ENCODE measurements at regions of chr16 and their contacts with region 1.

Region 1: GRCh38 chr16:3264137-3265036 is 8.0 kb upstream of the MEFV start:
- DNase-seq: peak; percentile 96 to 98
- ATAC-seq: peak; percentile 92 to 97 (median 96)
- H3K4me3 ChIP-seq: peak overlapping the region; percentile 39 to 85 (median 77)
- H3K27ac ChIP-seq: peak overlapping the region; percentile 90 to 100 (median 99)
- H3K4me1 ChIP-seq: peaks cover 0 to 39% (median 14%) of the 10 kb centered on the region in 9 donors
- H3K27me3 ChIP-seq: no peaks in the 10 kb centered on the region
- CTCF ChIP-seq: peak in 6 of 9 donors; percentile 12 to 59 (median 42)

Region 2: GRCh38 chr16:3150346-3151218 is 113.8 kb before region 1 on chr16:
- intact Hi-C with region 1: loop called in 1 of 10 experiments (anchors 10 kb)
- DNase-seq: peak; percentile 93 to 94
- ATAC-seq: peak; percentile 91 to 95 (median 94)
- H3K4me3 ChIP-seq: peak overlapping the region; percentile 53 to 78 (median 70)
- H3K27ac ChIP-seq: peak overlapping the region; percentile 59 to 93 (median 87)
- H3K4me1 ChIP-seq: peaks cover 2 to 38% (median 21%) of the 10 kb centered on the region in 9 donors
- H3K27me3 ChIP-seq: peaks cover 0 to 14% (median 0%) of the 10 kb centered on the region in 7 donors
- CTCF ChIP-seq: no peak

Region 3: GRCh38 chr16:3214904-3215600 is 49.3 kb before region 1 on chr16:
- intact Hi-C with region 1: no loop called
- DNase-seq: no peak
- ATAC-seq: no peak
- H3K4me3 ChIP-seq: no peak overlapping the region
- H3K27ac ChIP-seq: peak overlapping the region in 1 of 10 donors; percentile 69
- H3K4me1 ChIP-seq: peaks cover 0 to 6% (median 0%) of the 10 kb centered on the region in 9 donors
- H3K27me3 ChIP-seq: peaks cover 0 to 7% (median 0%) of the 10 kb centered on the region in 7 donors
- CTCF ChIP-seq: no peak

Region 4: DNA sequence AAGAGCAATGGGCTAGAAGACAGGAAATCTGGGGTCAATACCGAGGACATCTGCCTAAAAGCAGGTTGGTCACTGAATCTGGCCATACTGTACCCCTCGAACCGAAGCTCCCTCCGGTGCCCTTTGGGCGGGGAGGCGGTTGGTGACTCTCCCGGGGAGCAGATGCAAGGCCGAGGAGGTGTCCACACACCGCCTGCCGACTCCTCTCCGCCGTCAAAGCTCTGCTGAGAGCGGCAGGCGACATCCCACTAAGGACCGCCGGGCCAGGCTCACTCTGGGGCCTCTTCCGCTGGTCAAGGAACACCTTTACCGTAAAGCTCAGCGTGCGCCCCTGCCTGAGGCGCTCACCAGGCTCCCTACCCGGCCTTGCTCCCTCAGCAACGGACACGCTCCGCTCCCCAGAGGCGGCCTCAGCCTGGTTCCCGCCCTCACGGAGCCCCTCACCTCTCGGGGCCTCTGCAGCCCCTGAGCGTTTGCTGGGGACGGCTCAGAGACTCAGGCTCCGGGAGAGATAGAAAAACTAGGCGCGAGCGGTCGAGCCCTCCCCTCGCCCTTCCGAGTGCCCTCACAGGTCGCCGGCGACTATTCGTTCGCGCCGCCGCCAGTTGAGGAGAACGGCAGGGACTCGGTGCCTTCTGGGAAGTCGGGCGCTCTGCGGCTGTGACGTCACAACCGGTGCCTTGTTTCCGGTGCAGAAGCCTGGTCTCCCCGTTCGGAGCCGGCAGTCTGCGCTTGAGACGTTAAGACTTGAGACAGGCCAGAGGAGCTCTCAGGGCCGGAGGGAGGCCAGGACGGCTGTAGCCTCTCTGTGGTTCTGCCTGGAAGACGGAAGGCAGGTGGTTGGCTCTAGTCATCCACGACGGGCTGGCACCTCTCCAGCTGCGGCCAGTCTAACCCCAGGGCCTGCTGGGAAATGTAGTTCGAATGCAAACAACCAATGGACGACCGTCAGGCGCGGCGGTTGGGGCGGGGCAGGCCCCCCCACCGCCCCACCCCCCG is 29.5 kb before region 1 on chr16 and contains the start of gene ZNF200:
- intact Hi-C with region 1: loop called in 2 of 10 experiments (anchors 1 to 2 kb)
- DNase-seq: peak; percentile 96 to 97
- ATAC-seq: peak; percentile 99 to 100 (median 99)
- H3K4me3 ChIP-seq: peak within 1 kb of the TSS; percentile 68 to 95 (median 84)
- H3K27ac ChIP-seq: peak within 1 kb of the TSS; percentile 85 to 99 (median 96)
- H3K4me1 ChIP-seq: peaks cover 4 to 19% (median 14%) of the 10 kb centered on the region in 9 donors
- H3K27me3 ChIP-seq: no peaks in the 10 kb centered on the region
- CTCF ChIP-seq: no peak
- total RNA-seq, gene ZNF200: 4.6 to 8.9 (median 6.1) TPM

Region 5: DNA sequence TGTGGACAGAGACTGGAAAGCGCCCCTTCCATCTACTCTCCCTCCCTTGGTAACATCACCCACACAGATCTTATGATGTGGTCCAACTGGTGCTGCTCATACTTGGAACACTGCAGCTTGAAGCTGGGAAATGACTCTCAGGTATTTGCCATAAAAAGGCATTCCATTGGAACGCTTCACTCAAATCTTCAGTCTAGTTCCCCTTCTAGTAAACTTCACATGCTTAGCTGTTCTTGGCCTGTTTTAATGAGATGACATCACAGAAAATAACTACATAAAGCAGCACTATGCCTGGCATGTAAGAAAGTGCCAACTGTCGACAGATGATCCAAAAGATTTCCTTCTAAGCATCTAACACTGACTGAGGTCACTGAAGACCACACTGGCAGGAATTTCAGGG is 28.2 kb after region 1 on chr16:
- intact Hi-C with region 1: no loop called
- DNase-seq: no peak
- ATAC-seq: no peak
- H3K4me3 ChIP-seq: no peak overlapping the region
- H3K27ac ChIP-seq: no peak overlapping the region
- H3K4me1 ChIP-seq: peaks cover 0 to 6% (median 0%) of the 10 kb centered on the region in 9 donors
- H3K27me3 ChIP-seq: no peaks in the 10 kb centered on the region
- CTCF ChIP-seq: no peak

Region 6: GRCh38 chr16:3305109-3306068 is 41.0 kb after region 1 on chr16 and contains the starts of genes TIGD7 and ZNF75A:
- intact Hi-C with region 1: loop called in 3 of 10 experiments (anchors 2 to 5 kb)
- DNase-seq: peak; percentile 86 to 89
- ATAC-seq: peak; percentile 98 to 100 (median 99)
- H3K4me3 ChIP-seq: peak within 1 kb of the TSS; percentile 49 to 89 (median 69)
- H3K27ac ChIP-seq: peak within 1 kb of the TSS; percentile 82 to 98 (median 93)
- H3K4me1 ChIP-seq: peaks cover 0 to 27% (median 17%) of the 10 kb centered on the region in 9 donors
- H3K27me3 ChIP-seq: no peaks in the 10 kb centered on the region
- CTCF ChIP-seq: peak in 4 of 9 donors; percentile 15 to 46 (median 34)
- total RNA-seq, gene TIGD7: 6.5 to 11.2 (median 8.7) TPM
- total RNA-seq, gene ZNF75A: 15.2 to 25.5 (median 21.6) TPM

Region 7: GRCh38 chr16:3364774-3365427 is 100.5 kb after region 1 on chr16:
- intact Hi-C with region 1: no loop called
- DNase-seq: peak; percentile 88
- ATAC-seq: peak; percentile 99 to 100 (median 100)
- H3K4me3 ChIP-seq: peak overlapping the region; percentile 46 to 67 (median 60)
- H3K27ac ChIP-seq: peak overlapping the region; percentile 67 to 92 (median 89)
- H3K4me1 ChIP-seq: peaks cover 0 to 8% (median 0%) of the 10 kb centered on the region in 9 donors
- H3K27me3 ChIP-seq: peaks cover 0 to 17% (median 3%) of the 10 kb centered on the region in 7 donors
- CTCF ChIP-seq: no peak

Region 8: DNA sequence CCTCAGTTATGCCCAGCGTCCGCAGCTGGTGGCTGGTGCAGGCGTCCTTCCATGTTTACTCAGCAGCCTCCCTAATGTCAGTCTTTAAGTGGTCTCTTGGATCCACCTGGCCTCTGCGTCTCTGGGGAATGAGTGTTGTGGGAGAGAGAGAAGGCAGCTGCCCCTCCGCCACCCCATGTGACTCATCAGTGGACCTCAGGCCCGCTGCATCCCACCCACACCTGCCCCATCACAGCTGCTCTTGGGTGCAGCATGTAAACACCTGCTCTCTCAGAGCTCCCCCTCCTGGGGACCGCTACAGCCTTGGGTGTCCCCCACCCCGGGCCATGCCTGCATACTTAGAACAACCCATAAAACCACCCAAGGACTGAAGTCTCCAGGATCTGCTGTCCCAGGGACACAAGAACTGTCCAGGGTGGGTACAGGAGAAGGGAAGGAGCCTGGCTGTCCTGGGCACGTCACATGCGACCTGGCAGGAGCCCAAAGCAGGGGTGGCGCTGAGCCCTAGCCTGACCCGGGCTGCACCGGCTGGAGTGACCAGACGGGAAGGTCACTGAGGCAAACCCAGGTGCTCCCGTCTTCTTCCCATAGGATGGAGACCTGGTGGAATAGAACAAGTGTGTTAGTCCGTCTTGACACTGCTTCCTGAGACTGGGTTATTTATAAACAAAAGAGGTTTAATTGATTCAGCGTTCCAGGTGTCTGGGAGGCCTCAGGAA is 226.7 kb after region 1 on chr16:
- intact Hi-C with region 1: loop called in 1 of 10 experiments (anchors 10 kb)
- DNase-seq: no peak
- ATAC-seq: peak in 5 of 8 donors; percentile 4 to 25 (median 14)
- H3K4me3 ChIP-seq: no peak overlapping the region
- H3K27ac ChIP-seq: no peak overlapping the region
- H3K4me1 ChIP-seq: peaks cover 0 to 24% (median 9%) of the 10 kb centered on the region in 9 donors
- H3K27me3 ChIP-seq: no peaks in the 10 kb centered on the region
- CTCF ChIP-seq: peak in 2 of 9 donors; percentile 10 to 21

Region 9: GRCh38 chr16:3509470-3509928 is 245.1 kb after region 1 on chr16:
- intact Hi-C with region 1: loop called in 5 of 10 experiments (anchors 5 to 10 kb)
- DNase-seq: no peak
- ATAC-seq: peak in 1 of 8 donors; percentile 27
- H3K4me3 ChIP-seq: no peak overlapping the region
- H3K27ac ChIP-seq: peak overlapping the region in 1 of 10 donors; percentile 45
- H3K4me1 ChIP-seq: peaks cover 0 to 1% (median 0%) of the 10 kb centered on the region in 9 donors
- H3K27me3 ChIP-seq: no peaks in the 10 kb centered on the region
- CTCF ChIP-seq: no peak

Measured in heart right ventricle (tissue), 16 donors.